HEK293 (cell line): ENCODE measurements at regions of chr3 and their contacts with region 1.

Region 1: DNA sequence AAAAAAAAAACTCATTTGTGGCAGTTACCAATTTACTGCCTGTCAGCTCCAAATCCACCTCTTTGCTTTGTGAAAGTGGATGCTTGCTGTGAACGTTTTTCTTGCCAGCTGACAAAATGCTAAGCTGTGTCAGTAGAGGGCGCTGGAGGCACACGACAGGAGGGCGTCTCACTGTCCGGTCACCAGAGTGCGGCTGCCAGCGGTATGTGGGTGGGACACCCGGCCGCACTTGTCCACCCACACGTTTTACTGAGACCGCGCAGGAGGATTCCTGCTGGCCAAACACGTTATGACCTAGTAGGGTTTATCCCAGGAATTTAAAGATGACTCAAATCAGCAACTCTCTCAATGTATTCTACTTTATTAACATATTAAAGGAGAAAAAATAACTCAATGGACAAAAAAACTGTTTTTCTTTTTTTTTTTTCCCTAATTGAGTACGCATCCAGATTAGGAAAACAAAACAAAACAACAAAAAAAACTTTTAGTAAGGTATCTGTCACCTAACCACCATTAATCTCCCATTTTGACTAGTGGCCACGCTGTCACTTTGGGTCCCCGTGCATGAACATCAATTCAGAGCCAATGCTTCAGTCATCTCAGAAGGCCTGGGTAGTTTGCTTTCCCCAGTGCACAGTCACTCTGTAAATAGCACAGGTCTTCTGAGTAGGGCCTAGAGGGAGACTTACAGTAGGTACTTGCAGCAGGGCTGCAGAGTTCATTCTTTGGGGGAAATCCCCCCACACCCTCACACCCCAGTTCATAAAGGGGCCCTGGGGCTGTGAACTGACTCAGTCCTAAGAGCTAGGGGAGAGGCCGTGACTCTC is 43.8 kb upstream of the RPL35A start:
- H3K4me3 ChIP-seq: no peak overlapping the region
- H3K27ac ChIP-seq: no peak overlapping the region
- H3K4me1 ChIP-seq: no peaks in the 10 kb centered on the region
- CTCF ChIP-seq: peak; percentile 82

Region 2: DNA sequence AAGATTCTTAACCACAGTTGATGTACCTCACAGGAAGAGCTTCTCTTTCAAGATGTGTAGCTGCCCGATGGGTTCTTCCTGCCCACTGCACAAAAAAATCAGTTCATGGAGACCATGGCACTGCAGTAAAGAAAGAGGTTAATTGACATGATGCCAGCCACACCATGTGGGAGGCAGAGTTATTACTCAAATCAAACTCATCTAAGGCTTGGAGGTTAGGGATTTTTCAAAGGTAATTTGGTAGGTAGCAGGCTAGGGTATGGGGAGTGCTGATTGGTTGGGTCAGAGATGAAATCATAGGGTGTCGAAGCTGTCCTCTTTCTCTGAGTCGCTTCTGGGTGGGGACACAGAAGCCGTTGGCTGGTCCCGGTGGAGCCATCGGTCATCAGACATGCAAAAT is 293.0 kb before region 1 on chr3:
- CTCF ChIA-PET with region 1: no interaction called
- POLR2A ChIA-PET with region 1: no interaction called
- H3K4me3 ChIP-seq: no peak overlapping the region
- H3K27ac ChIP-seq: no peak overlapping the region
- H3K4me1 ChIP-seq: no peaks in the 10 kb centered on the region
- CTCF ChIP-seq: no peak

Region 3: DNA sequence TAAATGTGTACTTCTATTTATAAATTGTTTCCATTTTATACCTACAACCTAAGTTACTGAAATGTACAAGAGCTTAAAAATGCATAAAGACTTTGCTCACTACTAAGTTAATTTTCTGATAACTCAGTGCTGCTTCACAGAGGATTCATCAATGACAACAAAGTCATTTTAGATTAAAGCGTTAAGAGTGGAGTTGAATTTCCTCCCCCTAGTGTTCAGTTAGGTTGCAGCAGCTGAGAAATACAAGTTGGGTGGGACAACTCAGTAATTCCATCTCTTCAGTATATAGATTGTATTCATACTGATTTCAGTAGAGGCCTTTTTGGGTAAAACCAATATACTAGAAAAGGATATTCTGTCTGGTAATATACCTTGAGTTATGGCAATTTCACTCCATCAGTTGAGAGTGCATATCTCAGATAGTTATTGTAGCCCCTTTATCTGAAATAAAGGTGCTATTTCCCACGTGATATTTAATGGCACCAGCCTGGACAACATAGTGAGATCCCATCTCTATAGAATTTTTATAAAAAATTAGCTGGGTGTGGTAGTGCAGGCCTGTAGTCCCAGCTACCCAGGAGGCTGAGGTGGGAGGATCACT is 36.8 kb after region 1 on chr3:
- CTCF ChIA-PET with region 1: interaction called, 16 read pairs
- POLR2A ChIA-PET with region 1: no interaction called
- H3K4me3 ChIP-seq: no peak overlapping the region
- H3K27ac ChIP-seq: no peak overlapping the region
- H3K4me1 ChIP-seq: no peaks in the 10 kb centered on the region
- CTCF ChIP-seq: no peak

Region 4: DNA sequence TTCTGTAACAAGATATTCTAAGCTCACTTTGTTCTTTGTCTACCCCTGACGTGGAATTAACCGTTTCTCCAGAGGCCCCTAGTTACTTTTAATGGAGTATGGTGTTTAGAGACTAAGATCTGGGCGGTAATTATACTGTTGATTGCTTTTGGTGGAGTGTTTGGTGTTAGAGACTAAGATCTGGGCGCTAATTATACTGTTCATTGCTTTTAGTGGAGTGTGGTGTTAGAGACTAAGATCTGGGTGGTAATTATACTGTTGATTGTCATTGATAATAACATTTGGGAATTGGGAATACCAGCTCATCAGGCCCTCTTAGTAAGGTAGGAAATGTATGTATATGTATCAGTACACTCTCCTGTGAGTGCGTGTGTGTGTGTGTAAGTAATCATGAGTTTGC is 120.4 kb after region 1 on chr3:
- CTCF ChIA-PET with region 1: no interaction called
- POLR2A ChIA-PET with region 1: no interaction called
- H3K4me3 ChIP-seq: no peak overlapping the region
- H3K27ac ChIP-seq: no peak overlapping the region
- H3K4me1 ChIP-seq: no peaks in the 10 kb centered on the region; the same call in 1 of the 2 replicates
- CTCF ChIP-seq: no peak